Activated CD8-positive, alpha-beta T cell treated with anti-CD3 and anti-CD28 coated beads, Interleukin-2, amount 10 ng/mL, durations not matched to agents 7 days and 5 days (primary cell): ENCODE measurements at regions of chr12 and their contacts with region 1.

Region 1: GRCh38 chr12:9634177-9634803 is 26.6 kb upstream of the KLRB1 start:
- DNase-seq: peak; percentile 91
- ATAC-seq: peak; percentile 88
- H3K4me3 Mint-ChIP-seq: no peak overlapping the region
- H3K27ac Mint-ChIP-seq: peak overlapping the region; percentile 62
- H3K4me1 Mint-ChIP-seq: peaks cover 62% of the 10 kb centered on the region
- H3K27me3 Mint-ChIP-seq: no peaks in the 10 kb centered on the region

Region 2: DNA sequence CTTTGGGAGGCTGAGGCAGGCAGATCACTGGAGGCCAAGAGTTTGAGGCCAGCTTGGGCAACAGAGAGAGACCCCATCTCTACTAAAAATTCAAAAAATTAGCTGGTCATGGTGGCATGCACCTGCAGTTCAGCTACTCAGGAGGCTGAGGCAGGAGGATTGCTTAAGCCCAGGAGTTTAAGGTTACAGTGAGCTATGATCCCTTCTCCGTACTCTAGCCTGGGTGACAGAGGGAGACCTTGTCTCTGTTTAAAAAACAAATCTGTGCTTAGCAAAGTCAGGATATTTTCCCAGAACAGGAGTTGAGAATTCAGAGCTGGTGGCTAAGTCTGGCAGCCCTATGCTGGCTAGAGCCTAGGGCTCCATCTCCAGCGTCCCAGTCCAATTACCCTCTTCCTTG is 283.2 kb before region 1 on chr12:
- CTCF ChIA-PET with region 1: no interaction called
- POLR2A ChIA-PET with region 1: no interaction called
- DNase-seq: no peak
- ATAC-seq: no peak
- H3K4me3 Mint-ChIP-seq: no peak overlapping the region
- H3K27ac Mint-ChIP-seq: no peak overlapping the region
- H3K4me1 Mint-ChIP-seq: peaks cover 26% of the 10 kb centered on the region
- H3K27me3 Mint-ChIP-seq: no peaks in the 10 kb centered on the region

Region 3: DNA sequence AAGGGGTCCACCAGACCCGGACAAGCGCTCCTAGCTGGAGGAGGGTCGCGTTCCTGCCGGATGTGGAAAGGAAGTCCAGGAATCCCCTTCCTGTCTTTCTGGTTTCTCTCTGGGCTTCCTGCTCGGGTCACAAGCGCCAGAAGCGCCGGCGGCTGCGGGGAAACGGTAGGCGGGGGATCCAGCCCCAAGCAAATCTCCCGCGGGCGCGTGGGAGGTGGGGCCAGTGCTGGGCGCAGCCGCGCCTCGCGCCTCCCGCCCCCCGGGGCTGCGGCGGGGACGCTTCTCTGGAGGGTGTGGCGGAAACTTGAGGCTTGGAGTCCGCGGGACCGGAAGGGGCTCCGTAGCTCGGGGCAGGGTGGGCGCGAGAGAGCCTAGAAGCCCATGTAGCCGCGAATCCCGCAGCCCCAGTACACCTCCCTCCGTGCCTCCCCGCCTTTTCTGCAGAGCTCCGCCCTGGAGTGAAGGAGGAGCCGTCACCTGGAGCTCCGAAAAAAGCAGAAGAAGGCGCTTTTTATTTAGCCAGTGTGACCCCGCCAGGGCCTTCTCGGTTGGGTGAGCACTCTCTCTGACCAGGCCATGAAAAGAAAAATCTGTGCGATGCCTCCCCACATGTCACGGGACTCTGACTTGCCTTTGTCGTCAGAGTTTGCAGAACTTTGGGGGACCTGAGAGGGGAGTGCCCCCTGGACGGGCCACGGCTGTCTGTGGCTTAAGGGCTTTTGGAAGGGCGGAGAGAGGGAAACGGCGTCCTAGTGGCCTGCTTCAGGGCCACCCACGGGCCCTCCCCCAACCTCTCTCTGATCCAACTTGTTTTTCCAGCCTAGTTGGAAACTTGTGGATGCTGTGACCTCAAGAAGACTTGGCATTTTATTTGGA is 13.8 kb after region 1 on chr12:
- CTCF ChIA-PET with region 1: interaction called, 23 read pairs
- POLR2A ChIA-PET with region 1: interaction called, 13 read pairs
- DNase-seq: peak; percentile 97
- ATAC-seq: peak; percentile 83
- H3K4me3 Mint-ChIP-seq: peak overlapping the region; percentile 88
- H3K27ac Mint-ChIP-seq: peak overlapping the region; percentile 100
- H3K4me1 Mint-ChIP-seq: peaks cover 56% of the 10 kb centered on the region
- H3K27me3 Mint-ChIP-seq: peaks cover 2% of the 10 kb centered on the region

Region 4: GRCh38 chr12:9687228-9687627 is 52.9 kb after region 1 on chr12:
- CTCF ChIA-PET with region 1: interaction called, 11 read pairs
- POLR2A ChIA-PET with region 1: interaction called, 3 read pairs
- DNase-seq: no peak
- ATAC-seq: no peak
- H3K4me3 Mint-ChIP-seq: no peak overlapping the region
- H3K27ac Mint-ChIP-seq: peak overlapping the region; percentile 46
- H3K4me1 Mint-ChIP-seq: peaks cover 75% of the 10 kb centered on the region
- H3K27me3 Mint-ChIP-seq: no peaks in the 10 kb centered on the region

Region 5: GRCh38 chr12:9702255-9702654 is 68.0 kb after region 1 on chr12:
- CTCF ChIA-PET with region 1: interaction called, 91 read pairs
- POLR2A ChIA-PET with region 1: interaction called, 3 read pairs
- DNase-seq: peak; percentile 82
- ATAC-seq: peak; percentile 73
- H3K4me3 Mint-ChIP-seq: peak overlapping the region; percentile 65
- H3K27ac Mint-ChIP-seq: peak overlapping the region; percentile 88
- H3K4me1 Mint-ChIP-seq: peaks cover 75% of the 10 kb centered on the region
- H3K27me3 Mint-ChIP-seq: no peaks in the 10 kb centered on the region

Region 6: GRCh38 chr12:9707864-9708808 is 73.8 kb after region 1 on chr12:
- CTCF ChIA-PET with region 1: interaction called, 91 read pairs
- POLR2A ChIA-PET with region 1: interaction called, 4 read pairs
- DNase-seq: peak; percentile 81
- ATAC-seq: peak; percentile 84
- H3K4me3 Mint-ChIP-seq: peak overlapping the region; percentile 55
- H3K27ac Mint-ChIP-seq: peak overlapping the region; percentile 85
- H3K4me1 Mint-ChIP-seq: peaks cover 48% of the 10 kb centered on the region
- H3K27me3 Mint-ChIP-seq: no peaks in the 10 kb centered on the region

Region 7: GRCh38 chr12:9721394-9722092 is 87.3 kb after region 1 on chr12:
- CTCF ChIA-PET with region 1: interaction called, 12 read pairs
- POLR2A ChIA-PET with region 1: no interaction called
- DNase-seq: no peak
- ATAC-seq: no peak
- H3K4me3 Mint-ChIP-seq: no peak overlapping the region
- H3K27ac Mint-ChIP-seq: no peak overlapping the region
- H3K4me1 Mint-ChIP-seq: peaks cover 26% of the 10 kb centered on the region
- H3K27me3 Mint-ChIP-seq: no peaks in the 10 kb centered on the region